PC-3 (cell line): ENCODE measurements at regions of chr7 and their contacts with region 1.

Region 1: DNA sequence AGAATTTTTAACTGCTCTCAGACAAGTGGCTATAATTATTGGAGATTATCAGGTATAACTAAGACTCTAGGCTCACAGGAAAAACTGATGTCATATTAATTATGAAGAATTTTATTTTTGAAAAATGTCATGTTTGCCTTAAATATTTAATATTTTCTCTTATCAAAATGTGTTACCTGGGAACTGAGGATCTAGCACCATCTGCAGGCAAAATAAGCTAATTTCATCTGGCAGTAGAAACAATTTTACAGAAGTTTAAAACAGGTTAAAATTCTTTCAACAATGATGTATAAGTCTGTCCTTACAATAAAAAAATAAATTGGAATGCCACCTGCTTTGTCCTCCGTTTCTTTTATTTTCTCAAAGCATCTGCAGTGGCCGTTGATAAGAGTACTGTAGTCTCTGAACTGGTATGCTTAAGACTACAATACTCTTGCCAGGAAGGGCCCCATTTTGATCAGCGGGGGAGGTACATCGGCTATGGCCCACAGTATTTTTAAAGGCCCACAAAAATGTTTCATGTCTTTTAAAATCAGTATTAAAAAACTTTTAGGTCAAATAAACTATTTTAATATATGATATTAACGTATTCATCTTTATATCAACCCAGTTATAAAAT is 81.3 kb downstream of the VWDE start:
- DNase-seq: peak; percentile 56
- ATAC-seq: peak; percentile 57
- H3K4me3 ChIP-seq: no peak overlapping the region
- H3K27ac ChIP-seq: no peak overlapping the region
- H3K4me1 ChIP-seq: peaks cover 12% of the 10 kb centered on the region
- H3K27me3 ChIP-seq: no peaks in the 10 kb centered on the region
- CTCF ChIP-seq: peak; percentile 86

Region 2: DNA sequence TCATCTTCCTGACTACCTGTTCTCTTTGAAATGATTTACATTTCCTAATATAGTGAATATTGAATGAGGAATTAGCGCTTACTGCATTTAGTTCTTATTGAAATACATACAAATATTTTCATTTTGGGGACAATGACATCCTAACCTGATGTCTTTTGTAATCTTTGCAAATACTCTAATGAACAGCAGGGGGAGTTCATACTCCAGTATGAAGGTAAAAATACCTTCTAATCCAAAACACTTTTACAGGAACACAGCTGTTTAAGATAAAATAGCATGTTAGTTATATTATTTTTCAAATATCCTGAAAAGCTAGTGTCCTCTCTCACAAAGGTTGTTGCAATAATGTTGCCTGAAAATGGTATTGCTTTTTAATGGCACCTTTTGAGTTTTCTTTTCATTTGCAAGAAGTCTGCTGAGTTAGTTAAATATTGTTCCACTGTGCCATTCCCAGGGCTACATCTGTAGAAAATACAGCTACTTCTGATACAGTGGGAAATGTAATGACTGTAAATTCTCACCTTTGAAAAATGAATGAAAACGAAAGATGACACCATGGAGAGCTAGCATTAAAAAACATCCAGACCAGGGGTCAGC is 948.7 kb before region 1 on chr7:
- CTCF ChIA-PET with region 1: no interaction called
- POLR2A ChIA-PET with region 1: no interaction called
- intact Hi-C with region 1: loop called (anchors 2 kb)
- DNase-seq: peak; percentile 54
- ATAC-seq: peak; percentile 62; the same call in 1 of the 2 replicates
- H3K4me3 ChIP-seq: no peak overlapping the region
- H3K27ac ChIP-seq: no peak overlapping the region
- H3K4me1 ChIP-seq: no peaks in the 10 kb centered on the region
- H3K27me3 ChIP-seq: 0 out of 2 replicates have a peak, but pooled peaks cover 12% of the 10 kb centered on the region
- CTCF ChIP-seq: peak; percentile 75

Region 3: GRCh38 chr7:11923376-11923930 is 398.9 kb before region 1 on chr7:
- CTCF ChIA-PET with region 1: no interaction called
- POLR2A ChIA-PET with region 1: no interaction called
- intact Hi-C with region 1: loop called (anchors 10 kb)
- DNase-seq: peak; percentile 57
- ATAC-seq: peak; percentile 98
- H3K4me3 ChIP-seq: no peak overlapping the region
- H3K27ac ChIP-seq: no peak overlapping the region
- H3K4me1 ChIP-seq: no peaks in the 10 kb centered on the region; the same call in 1 of the 2 replicates
- H3K27me3 ChIP-seq: no peaks in the 10 kb centered on the region
- CTCF ChIP-seq: no peak

Region 4: DNA sequence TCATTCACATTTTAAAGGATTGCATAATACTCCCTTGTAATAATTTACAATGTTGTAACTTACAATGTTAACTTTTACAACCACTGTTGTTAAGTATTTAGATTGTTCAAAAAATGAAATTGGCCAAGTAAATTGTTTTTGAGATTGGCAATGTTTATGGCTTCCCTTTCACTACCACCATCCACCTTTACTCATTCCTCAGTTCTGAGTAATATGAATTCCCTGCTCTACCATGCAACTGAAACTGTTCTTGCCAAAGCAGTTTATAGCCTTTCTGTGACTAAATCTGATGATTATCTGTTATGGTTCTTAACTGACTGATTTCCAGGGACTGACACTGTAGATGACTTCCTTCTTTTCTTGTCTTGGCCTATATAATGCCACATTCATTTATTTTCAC is 191.8 kb before region 1 on chr7:
- CTCF ChIA-PET with region 1: no interaction called
- POLR2A ChIA-PET with region 1: no interaction called
- intact Hi-C with region 1: loop called (anchors 2 kb)
- DNase-seq: peak; percentile 86
- ATAC-seq: peak; percentile 97
- H3K4me3 ChIP-seq: no peak overlapping the region
- H3K27ac ChIP-seq: peak overlapping the region; percentile 45
- H3K4me1 ChIP-seq: peaks cover 18% of the 10 kb centered on the region
- H3K27me3 ChIP-seq: no peaks in the 10 kb centered on the region
- CTCF ChIP-seq: no peak

Region 5: DNA sequence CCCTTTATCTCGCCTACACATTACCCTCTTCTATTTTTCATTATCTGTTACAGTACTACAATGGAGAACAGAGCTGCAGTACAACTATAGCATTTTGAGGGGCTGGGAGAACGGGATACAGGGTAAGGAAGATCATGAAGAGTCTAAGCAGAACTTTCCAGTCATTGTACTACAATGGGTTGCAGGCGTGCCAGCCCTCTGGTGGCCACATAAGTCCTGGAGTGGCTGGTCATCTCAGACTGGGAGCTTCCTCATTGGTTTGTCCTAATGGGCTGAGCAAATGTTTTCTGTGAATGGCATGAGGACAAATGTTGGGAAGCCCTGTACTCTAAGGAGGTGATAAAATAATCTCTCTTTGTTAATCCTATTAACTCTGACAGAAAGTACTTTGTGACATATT is 78.3 kb before region 1 on chr7:
- CTCF ChIA-PET with region 1: interaction called, 12 read pairs
- POLR2A ChIA-PET with region 1: no interaction called
- intact Hi-C with region 1: loop called (anchors 2 kb)
- DNase-seq: peak; percentile 59
- ATAC-seq: peak; percentile 83
- H3K4me3 ChIP-seq: no peak overlapping the region
- H3K27ac ChIP-seq: no peak overlapping the region
- H3K4me1 ChIP-seq: peaks cover 11% of the 10 kb centered on the region
- H3K27me3 ChIP-seq: no peaks in the 10 kb centered on the region
- CTCF ChIP-seq: peak; percentile 74